Caco-2 (cell line): ENCODE measurements at regions of chr12 and their contacts with region 1.

Region 1: DNA sequence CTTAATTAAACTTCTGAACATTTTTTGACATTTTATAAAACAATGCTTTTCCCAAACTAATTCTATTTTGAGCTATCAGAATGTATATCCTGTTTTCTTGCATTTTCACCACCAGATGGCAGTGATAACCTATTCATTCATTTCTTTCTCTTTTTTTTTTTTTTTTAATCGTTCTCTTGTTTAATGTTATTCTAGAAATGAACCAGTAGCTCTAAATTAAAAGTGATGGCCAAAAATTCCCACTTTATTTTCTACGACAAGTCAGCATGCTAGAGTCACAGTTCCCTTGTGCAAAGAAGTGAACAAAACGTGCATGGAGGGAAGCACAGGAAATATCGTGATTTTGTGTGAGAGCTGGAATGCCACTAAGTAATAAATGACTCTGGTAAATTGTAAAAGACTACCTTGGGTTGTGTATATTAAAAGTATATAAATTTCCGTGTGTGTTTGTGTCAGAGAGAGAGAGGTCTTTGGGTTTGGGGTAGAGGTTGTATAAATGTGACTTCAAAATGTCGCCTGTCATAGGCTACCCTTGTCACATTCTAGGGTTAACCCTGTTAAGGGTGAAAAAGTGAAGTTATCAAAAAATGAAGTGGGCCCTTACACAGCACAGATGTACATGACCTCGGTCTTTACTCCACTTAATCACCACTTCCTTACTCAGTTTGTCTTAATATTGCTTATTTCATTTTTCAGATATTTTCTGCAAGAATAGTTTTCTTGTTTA is 40.4 kb upstream of the LDHB start:
- DNase-seq: peak in 1 of 2 experiments; percentile 47
- H3K4me3 ChIP-seq: no peak overlapping the region
- H3K4me3 Mint-ChIP-seq: peak overlapping the region; percentile 45
- H3K27ac Mint-ChIP-seq: peak overlapping the region; percentile 13
- H3K4me1 ChIP-seq: peaks cover 11% of the 10 kb centered on the region; the same call in 1 of the 2 replicates
- H3K4me1 Mint-ChIP-seq: peaks cover 13% of the 10 kb centered on the region
- H3K27me3 ChIP-seq: no peaks in the 10 kb centered on the region
- H3K27me3 Mint-ChIP-seq: no peaks in the 10 kb centered on the region
- CTCF ChIP-seq: peak; percentile 54 to 85

Region 2: DNA sequence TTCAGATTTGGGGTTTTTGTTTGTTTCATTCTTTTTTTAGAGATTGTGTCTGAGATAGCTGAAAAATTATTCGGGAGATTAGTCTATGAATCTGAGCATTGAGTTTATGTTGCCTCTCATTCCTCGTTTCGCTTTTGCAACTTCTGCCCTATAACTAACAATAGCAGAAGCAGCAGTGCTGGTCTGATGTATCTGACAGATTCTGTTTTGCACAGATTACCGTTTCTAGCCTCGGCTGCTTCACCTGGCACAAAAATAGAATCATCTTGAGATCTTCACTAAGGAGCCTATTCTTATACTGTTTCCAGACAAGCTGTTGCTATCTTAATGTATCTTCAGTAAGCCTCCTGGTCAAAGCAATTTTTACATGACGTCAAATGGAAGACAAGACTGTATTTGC is 47.2 kb after region 1 on chr12:
- CTCF ChIA-PET with region 1: no interaction called
- POLR2A ChIA-PET with region 1: no interaction called
- intact Hi-C with region 1: no loop called
- DNase-seq: no peak
- H3K4me3 ChIP-seq: no peak overlapping the region
- H3K4me3 Mint-ChIP-seq: no peak overlapping the region
- H3K27ac Mint-ChIP-seq: no peak overlapping the region
- H3K4me1 ChIP-seq: no peaks in the 10 kb centered on the region
- H3K4me1 Mint-ChIP-seq: no peaks in the 10 kb centered on the region
- H3K27me3 ChIP-seq: no peaks in the 10 kb centered on the region
- H3K27me3 Mint-ChIP-seq: no peaks in the 10 kb centered on the region
- CTCF ChIP-seq: no peak

Region 3: DNA sequence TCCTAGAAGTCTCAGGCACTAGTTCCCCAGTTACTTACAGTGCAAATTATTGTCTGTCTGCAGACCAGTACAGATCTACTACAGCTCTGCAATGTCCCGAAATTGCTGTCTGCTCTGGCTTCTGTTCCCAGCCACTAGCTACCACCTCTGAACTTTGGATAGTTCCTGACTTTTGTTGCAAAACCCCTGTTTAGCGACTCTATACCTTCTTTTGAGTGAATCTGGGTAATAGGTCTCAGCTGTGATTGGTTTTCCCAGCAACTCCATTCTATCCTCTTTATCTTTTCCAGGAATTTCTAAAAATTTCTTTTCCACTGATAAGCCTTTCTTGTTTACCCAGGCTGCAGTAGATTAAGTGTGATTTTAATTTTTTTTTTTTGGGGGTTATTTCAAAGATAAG is 59.7 kb after region 1 on chr12:
- CTCF ChIA-PET with region 1: no interaction called
- POLR2A ChIA-PET with region 1: no interaction called
- intact Hi-C with region 1: loop called (anchors 5 kb)
- DNase-seq: peak in 1 of 2 experiments; percentile 36
- H3K4me3 ChIP-seq: no peak overlapping the region
- H3K4me3 Mint-ChIP-seq: peak overlapping the region; percentile 26
- H3K27ac Mint-ChIP-seq: peak overlapping the region; percentile 34
- H3K4me1 ChIP-seq: peaks cover 17% of the 10 kb centered on the region
- H3K4me1 Mint-ChIP-seq: peaks cover 23% of the 10 kb centered on the region
- H3K27me3 ChIP-seq: no peaks in the 10 kb centered on the region
- H3K27me3 Mint-ChIP-seq: no peaks in the 10 kb centered on the region
- CTCF ChIP-seq: no peak

Region 4: DNA sequence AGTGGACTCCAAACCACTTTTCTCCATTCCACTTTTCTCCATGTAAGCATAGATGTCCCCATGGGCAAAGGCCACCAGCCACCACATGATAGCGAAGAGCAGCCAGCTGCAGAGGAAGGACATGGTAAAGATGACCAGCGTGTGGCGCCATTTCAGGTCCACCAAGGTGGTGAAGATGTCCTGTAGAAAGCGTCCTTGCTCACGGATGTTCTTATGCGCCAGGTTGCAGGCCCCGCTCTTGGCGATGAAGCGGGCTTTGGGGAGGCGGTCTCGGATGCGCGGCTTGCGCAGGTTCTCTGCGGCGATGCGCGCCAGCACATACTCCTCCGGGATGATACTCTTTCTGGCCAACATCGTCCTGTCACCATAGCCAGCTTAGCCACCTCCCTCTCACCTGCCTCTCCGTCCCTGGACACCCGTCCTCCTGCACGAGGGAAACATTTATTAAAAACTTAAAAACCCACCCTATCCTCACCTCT is 75.2 kb after region 1 on chr12:
- CTCF ChIA-PET with region 1: interaction called, 4 read pairs
- POLR2A ChIA-PET with region 1: no interaction called
- intact Hi-C with region 1: loop called (anchors 1 kb)
- DNase-seq: peak; percentile 88 to 89
- H3K4me3 ChIP-seq: peak overlapping the region; percentile 88
- H3K4me3 Mint-ChIP-seq: peak overlapping the region; percentile 76
- H3K27ac Mint-ChIP-seq: peak overlapping the region; percentile 41
- H3K4me1 ChIP-seq: peaks cover 35% of the 10 kb centered on the region
- H3K4me1 Mint-ChIP-seq: peaks cover 51% of the 10 kb centered on the region
- H3K27me3 ChIP-seq: no peaks in the 10 kb centered on the region
- H3K27me3 Mint-ChIP-seq: no peaks in the 10 kb centered on the region
- CTCF ChIP-seq: peak; percentile 76 to 87

Region 5: GRCh38 chr12:21989819-21990412 is 291.8 kb after region 1 on chr12:
- CTCF ChIA-PET with region 1: interaction called, 109 read pairs
- POLR2A ChIA-PET with region 1: no interaction called
- intact Hi-C with region 1: loop called (anchors 1 kb)
- DNase-seq: peak in 1 of 2 experiments; percentile 46
- H3K4me3 ChIP-seq: no peak overlapping the region
- H3K4me3 Mint-ChIP-seq: no peak overlapping the region
- H3K27ac Mint-ChIP-seq: no peak overlapping the region
- H3K4me1 ChIP-seq: peaks cover 24% of the 10 kb centered on the region
- H3K4me1 Mint-ChIP-seq: peaks cover 35% of the 10 kb centered on the region
- H3K27me3 ChIP-seq: no peaks in the 10 kb centered on the region
- H3K27me3 Mint-ChIP-seq: no peaks in the 10 kb centered on the region
- CTCF ChIP-seq: peak; percentile 83 to 85

Region 6: DNA sequence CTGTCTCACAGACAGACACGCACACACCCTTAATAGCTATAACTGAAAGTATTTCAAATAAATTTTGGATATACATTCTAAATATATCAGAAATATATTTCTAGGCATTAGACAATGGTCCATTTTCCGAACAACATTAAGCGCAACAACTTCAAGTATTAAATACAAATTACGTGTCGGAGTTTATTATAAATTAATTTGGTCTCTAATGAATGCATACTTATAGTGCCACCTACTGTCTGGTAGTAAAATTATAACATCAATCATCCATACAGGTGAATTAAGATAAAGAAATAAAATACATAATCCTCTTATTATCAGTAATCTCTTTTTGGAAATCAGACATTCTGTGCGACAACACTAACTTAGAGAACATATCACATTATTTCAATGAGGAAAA is 320.8 kb after region 1 on chr12:
- CTCF ChIA-PET with region 1: interaction called, 19 read pairs
- POLR2A ChIA-PET with region 1: no interaction called
- intact Hi-C with region 1: loop called (anchors 1 kb)
- DNase-seq: no peak
- H3K4me3 ChIP-seq: no peak overlapping the region
- H3K4me3 Mint-ChIP-seq: no peak overlapping the region
- H3K27ac Mint-ChIP-seq: no peak overlapping the region
- H3K4me1 ChIP-seq: no peaks in the 10 kb centered on the region
- H3K4me1 Mint-ChIP-seq: no peaks in the 10 kb centered on the region
- H3K27me3 ChIP-seq: no peaks in the 10 kb centered on the region
- H3K27me3 Mint-ChIP-seq: no peaks in the 10 kb centered on the region
- CTCF ChIP-seq: peak; percentile 34 to 77

Region 7: GRCh38 chr12:22069856-22070565 is 371.9 kb after region 1 on chr12:
- CTCF ChIA-PET with region 1: no interaction called
- POLR2A ChIA-PET with region 1: no interaction called
- intact Hi-C with region 1: loop called (anchors 5 kb)
- DNase-seq: no peak
- H3K4me3 ChIP-seq: no peak overlapping the region
- H3K4me3 Mint-ChIP-seq: no peak overlapping the region
- H3K27ac Mint-ChIP-seq: no peak overlapping the region
- H3K4me1 ChIP-seq: peaks cover 9% of the 10 kb centered on the region
- H3K4me1 Mint-ChIP-seq: peaks cover 7% of the 10 kb centered on the region
- H3K27me3 ChIP-seq: no peaks in the 10 kb centered on the region
- H3K27me3 Mint-ChIP-seq: no peaks in the 10 kb centered on the region
- CTCF ChIP-seq: no peak

Region 8: DNA sequence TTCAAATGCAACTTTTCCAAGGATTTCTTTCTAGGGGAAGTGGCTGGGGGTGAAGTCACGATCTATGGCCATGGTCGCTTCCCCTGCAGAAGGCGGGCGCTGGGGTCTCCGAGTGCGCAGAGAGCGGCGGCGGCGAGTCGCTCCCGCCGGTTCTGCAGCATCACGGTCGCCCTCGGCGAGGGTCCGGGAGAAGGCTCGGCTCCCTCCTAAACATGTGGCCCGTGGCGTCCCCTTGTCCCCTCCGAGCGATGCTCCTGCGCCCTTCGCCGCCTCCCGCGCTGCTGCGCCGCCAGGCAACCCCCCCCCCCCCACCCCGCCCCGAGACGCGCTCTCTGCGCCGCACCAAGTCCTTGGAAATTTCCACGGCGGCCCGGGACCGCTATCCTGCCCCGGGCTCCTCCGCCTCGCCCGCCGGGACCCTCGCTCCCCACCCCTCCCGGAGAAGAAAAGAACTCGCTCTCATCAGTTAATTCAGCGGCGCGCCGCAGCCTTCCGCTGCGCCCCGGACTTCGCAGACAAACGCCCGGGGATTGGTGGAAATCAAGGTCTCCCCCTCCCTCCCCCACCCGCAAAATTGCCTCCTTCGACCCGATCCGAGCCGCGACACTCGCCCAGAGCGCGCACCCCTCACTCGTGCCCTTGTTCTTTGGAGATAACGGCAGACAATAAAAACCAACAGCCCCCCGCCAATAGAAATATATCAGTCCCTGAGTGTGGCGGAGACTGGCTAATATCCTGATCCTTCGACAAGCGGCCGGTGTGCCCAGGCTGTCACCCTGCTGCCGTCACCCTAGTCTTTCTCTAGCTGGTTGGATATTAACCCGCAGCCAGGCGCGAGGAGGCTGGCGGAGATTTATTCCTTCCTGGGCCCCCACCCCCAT is 636.6 kb after region 1 on chr12 and contains the start of gene ST8SIA1:
- CTCF ChIA-PET with region 1: interaction called, 7 read pairs
- POLR2A ChIA-PET with region 1: no interaction called
- intact Hi-C with region 1: loop called (anchors 1 kb)
- DNase-seq: no peak
- H3K4me3 ChIP-seq: peak within 1 kb of the TSS; percentile 53
- H3K4me3 Mint-ChIP-seq: peak within 1 kb of the TSS; percentile 82
- H3K27ac Mint-ChIP-seq: no peak within 1 kb of the TSS
- H3K4me1 ChIP-seq: peaks cover 6% of the 10 kb centered on the region; the same call in 1 of the 2 replicates
- H3K4me1 Mint-ChIP-seq: no peaks in the 10 kb centered on the region
- H3K27me3 ChIP-seq: no peaks in the 10 kb centered on the region; the same call in 1 of the 2 replicates
- H3K27me3 Mint-ChIP-seq: peaks cover 25% of the 10 kb centered on the region
- CTCF ChIP-seq: no peak
- total RNA-seq, gene ST8SIA1: not detected in 2 replicates